H1 (cell line): ENCODE measurements at regions of chr2 and their contacts with region 1.

Region 1: DNA sequence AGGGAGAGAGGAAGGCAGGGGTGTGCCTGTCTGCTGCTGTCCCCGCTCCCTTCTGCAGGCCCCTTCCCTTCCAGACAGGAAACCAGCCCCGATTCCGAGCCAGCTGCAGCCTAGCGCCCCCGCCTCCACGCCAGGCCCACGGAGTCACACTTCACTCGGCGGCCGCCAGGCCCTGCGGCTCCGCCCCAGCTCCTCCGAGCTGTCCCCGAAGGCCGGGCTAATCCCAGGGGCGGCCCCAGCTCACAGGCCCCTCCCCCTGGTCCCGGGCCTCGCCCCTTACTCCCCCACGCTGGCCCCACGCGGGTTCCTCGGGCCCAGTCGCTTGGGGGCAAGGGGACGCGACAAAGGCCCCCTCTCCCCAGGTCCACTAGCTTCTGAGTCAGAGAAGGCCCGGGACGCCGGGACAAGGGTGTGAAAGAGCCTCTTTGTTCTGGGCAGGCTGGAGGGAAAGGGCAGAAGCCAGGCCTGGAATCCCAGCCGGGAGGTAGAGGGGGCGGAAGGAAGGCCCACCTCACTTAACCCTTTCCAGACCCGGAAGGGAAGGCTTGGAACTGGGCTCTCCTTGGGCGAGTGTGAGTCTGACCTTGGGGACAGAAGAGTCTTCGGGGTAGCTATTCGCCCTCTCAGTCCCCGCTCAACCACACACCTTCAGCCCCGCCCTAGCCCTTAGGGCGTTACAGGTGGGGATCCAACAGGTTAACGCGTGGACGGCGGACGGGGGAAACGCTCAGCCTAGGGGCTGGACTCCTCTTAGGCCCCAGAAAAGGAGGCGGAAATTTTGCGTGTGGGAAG is 1.2 kb downstream of the RTKN start:
- DNase-seq: peak in 1 of 2 experiments; percentile 92
- H3K4me3 ChIP-seq: peak overlapping the region; percentile 69 to 90 (median 80)
- H3K27ac ChIP-seq: peak overlapping the region; percentile 87
- H3K4me1 ChIP-seq: peaks cover 4 to 24% (median 17%) of the 10 kb centered on the region in 4 experiments; a peak in 6 of 7 replicates
- H3K27me3 ChIP-seq: no peaks in the 10 kb centered on the region; a peak in 2 of 7 replicates
- CTCF ChIP-seq: peak in 2 of 3 experiments; percentile 12 to 18; a peak in 2 of 4 replicates
- EP300 ChIP-seq: no peak
- POLR2A ChIP-seq: peak in 1 of 2 experiments; percentile 50; a peak in 1 of 3 replicates
- RAD21 ChIP-seq: no peak

Region 2: GRCh38 chr2:74421221-74421870 is 19.2 kb before region 1 on chr2 and contains the starts of genes C2orf81 and WDR54:
- CTCF ChIA-PET with region 1: interaction called, 3 read pairs
- POLR2A ChIA-PET with region 1: interaction called, 42 read pairs
- DNase-seq: peak; percentile 84 to 96
- H3K4me3 ChIP-seq: peak within 1 kb of the TSS; percentile 51 to 92 (median 74)
- H3K27ac ChIP-seq: peak within 1 kb of the TSS; percentile 51; the same call in 1 of the 2 replicates
- H3K4me1 ChIP-seq: peaks cover 0 to 5% (median 3%) of the 10 kb centered on the region in 4 experiments; a peak in 3 of 7 replicates
- H3K27me3 ChIP-seq: 0 out of 7 replicates have a peak, but pooled peaks cover 0 to 2% (median 0%) of the 10 kb centered on the region in 4 experiments
- CTCF ChIP-seq: no peak
- EP300 ChIP-seq: no peak
- POLR2A ChIP-seq: peak in 1 of 2 experiments; percentile 92; a peak in 2 of 3 replicates
- RAD21 ChIP-seq: no peak
- total RNA-seq, gene C2orf81: 3.3 and 3.8 TPM in 2 replicates
- total RNA-seq, gene WDR54: 41.6 and 45.0 TPM in 2 replicates

Region 3: DNA sequence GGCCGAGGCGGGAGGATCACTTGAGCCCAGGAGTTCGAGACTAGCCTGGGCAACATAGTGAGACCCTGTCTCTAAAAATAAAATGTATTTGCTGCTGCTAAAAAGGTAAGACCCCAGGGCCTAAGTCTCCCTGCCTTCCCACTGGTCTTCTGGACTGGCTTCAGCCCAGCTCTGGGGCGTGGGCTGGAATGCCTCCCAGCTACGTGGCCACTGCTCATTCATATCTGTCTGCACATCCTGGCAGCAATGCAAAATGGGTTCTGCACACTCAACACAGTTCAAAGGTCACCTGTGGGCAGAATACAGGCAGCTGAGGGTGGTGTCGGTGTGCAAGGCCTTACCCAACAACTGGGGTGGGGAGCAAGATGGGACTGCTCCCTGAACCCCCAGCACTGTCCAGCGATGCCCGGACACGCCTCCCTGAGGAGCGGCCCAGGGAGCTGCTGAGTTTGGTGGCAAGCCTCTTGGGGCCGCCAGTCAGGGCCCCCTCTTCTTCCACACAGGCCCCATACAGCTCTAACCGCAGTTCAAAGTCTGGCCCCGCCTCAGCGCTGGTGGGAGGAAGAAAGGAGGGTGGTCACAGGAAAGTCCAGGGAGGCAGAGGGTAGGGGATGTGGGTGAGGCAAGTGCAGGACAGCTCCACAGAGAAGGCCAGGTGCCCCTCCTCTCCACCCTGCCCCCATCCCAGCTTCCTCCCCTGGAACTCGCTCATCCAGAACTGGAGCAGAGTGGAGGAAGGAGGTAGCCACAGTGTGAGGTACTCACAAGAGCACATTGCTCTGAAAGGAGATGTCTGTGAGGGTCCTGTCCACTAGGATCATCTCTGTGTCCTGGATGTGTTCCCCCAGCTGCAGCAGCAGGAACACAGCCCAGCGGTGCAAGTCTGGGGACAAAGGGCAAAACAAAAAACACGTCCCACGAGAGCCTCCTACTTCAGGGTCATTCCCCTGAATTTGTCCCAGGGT is 10.8 kb before region 1 on chr2:
- CTCF ChIA-PET with region 1: interaction called, 7 read pairs
- POLR2A ChIA-PET with region 1: interaction called, 42 read pairs
- DNase-seq: no peak
- H3K4me3 ChIP-seq: no peak overlapping the region
- H3K27ac ChIP-seq: no peak overlapping the region
- H3K4me1 ChIP-seq: 0 out of 7 replicates have a peak, but pooled peaks cover 0 to 2% (median 0%) of the 10 kb centered on the region in 4 experiments
- H3K27me3 ChIP-seq: no peaks in the 10 kb centered on the region
- CTCF ChIP-seq: no peak
- EP300 ChIP-seq: no peak
- POLR2A ChIP-seq: no peak
- RAD21 ChIP-seq: no peak

Region 4: GRCh38 chr2:74538881-74539339 is 98.3 kb after region 1 on chr2:
- CTCF ChIA-PET with region 1: no interaction called
- POLR2A ChIA-PET with region 1: no interaction called
- DNase-seq: no peak
- H3K4me3 ChIP-seq: no peak overlapping the region
- H3K27ac ChIP-seq: no peak overlapping the region
- H3K4me1 ChIP-seq: no peaks in the 10 kb centered on the region; a peak in 1 of 7 replicates
- H3K27me3 ChIP-seq: no peaks in the 10 kb centered on the region; a peak in 1 of 7 replicates
- CTCF ChIP-seq: no peak
- EP300 ChIP-seq: no peak
- POLR2A ChIP-seq: no peak
- RAD21 ChIP-seq: no peak